ENCODE measurements at regions of chr1 and their contacts with region 1.

Region 1: GRCh38 chr1:204398217-204399081 is 13.2 kb downstream of the PPP1R15B start:
- DNase-seq: peak; percentile 88 to 91
- H3K4me3 ChIP-seq: no peak overlapping the region
- H3K4me3 Mint-ChIP-seq: no peak overlapping the region
- H3K27ac Mint-ChIP-seq: no peak overlapping the region
- H3K4me1 ChIP-seq: no peaks in the 10 kb centered on the region
- H3K4me1 Mint-ChIP-seq: peaks cover 10% of the 10 kb centered on the region
- H3K27me3 ChIP-seq: no peaks in the 10 kb centered on the region
- H3K27me3 Mint-ChIP-seq: no peaks in the 10 kb centered on the region
- CTCF ChIP-seq: peak; percentile 82 to 90

Region 2: DNA sequence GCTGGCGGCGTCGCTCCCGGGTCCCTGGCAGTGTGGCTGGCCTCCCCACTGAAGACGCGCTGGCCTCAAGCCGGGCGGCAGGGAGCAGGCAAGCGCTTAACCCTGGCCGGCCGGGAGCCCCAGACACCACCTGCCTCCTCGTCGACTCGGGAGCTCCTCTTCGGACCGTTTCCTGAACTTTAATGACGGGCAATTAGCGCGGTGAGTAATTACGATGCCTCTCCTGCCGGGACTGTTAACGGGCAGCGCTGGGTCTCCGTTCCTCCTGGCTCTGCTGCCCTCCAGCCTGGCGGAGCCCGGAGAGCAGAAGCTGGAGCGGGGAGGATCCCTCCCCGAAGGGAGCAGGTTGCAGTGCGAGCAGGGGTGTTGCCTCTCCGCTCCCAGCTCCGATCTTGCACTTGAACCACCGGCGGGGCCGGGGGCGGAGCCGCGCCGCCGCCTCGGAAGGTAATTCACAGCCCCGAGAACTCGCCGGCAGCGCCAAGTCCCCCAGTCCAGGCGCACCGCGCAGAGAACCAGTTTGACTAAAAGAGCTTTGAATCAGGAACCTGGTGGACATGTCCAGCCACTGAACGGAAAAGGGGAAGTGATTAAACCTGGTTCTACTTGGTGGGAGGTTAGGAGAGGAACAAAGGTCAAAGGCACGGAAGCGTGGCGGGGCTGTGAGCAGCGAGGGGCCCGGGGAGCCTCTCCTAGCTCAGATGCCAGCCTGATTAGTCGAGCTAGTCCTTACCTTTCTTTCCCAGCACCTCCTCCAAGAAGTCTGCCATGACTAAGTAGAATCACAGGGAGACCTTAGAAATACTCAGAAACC is 20.4 kb before region 1 on chr1:
- CTCF ChIA-PET with region 1: interaction called, 36 read pairs
- POLR2A ChIA-PET with region 1: interaction called, 7 read pairs
- intact Hi-C with region 1: loop called (anchors 1 kb)
- DNase-seq: peak; percentile 60 to 66
- H3K4me3 ChIP-seq: peak overlapping the region; percentile 76
- H3K4me3 Mint-ChIP-seq: peak overlapping the region; percentile 88
- H3K27ac Mint-ChIP-seq: peak overlapping the region; percentile 78
- H3K4me1 ChIP-seq: peaks cover 24% of the 10 kb centered on the region
- H3K4me1 Mint-ChIP-seq: no peaks in the 10 kb centered on the region
- H3K27me3 ChIP-seq: no peaks in the 10 kb centered on the region
- H3K27me3 Mint-ChIP-seq: no peaks in the 10 kb centered on the region
- CTCF ChIP-seq: no peak

Region 3: DNA sequence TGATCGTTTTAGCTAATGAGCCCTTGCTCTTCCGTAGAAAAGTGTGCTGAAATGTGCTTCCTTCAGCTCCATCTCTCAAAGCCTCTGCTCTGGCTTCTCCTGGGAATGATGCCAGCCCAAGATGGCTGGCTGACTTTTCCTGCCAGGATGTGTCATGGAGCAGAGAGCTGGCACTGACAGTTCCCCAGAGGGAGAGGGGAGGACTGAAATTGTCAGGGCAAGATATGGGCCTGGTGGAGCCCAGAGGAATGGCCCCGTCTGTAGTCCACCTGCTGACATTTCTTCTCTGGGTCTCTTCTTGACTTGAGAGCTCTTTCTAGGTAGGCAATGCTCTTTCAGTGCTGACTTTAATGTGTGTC is 13.5 kb before region 1 on chr1:
- CTCF ChIA-PET with region 1: interaction called, 22 read pairs
- POLR2A ChIA-PET with region 1: no interaction called
- intact Hi-C with region 1: loop called (anchors 1 kb)
- DNase-seq: no peak
- H3K4me3 ChIP-seq: no peak overlapping the region
- H3K4me3 Mint-ChIP-seq: no peak overlapping the region
- H3K27ac Mint-ChIP-seq: no peak overlapping the region
- H3K4me1 ChIP-seq: peaks cover 25% of the 10 kb centered on the region
- H3K4me1 Mint-ChIP-seq: no peaks in the 10 kb centered on the region
- H3K27me3 ChIP-seq: no peaks in the 10 kb centered on the region
- H3K27me3 Mint-ChIP-seq: no peaks in the 10 kb centered on the region
- CTCF ChIP-seq: no peak

Region 4: DNA sequence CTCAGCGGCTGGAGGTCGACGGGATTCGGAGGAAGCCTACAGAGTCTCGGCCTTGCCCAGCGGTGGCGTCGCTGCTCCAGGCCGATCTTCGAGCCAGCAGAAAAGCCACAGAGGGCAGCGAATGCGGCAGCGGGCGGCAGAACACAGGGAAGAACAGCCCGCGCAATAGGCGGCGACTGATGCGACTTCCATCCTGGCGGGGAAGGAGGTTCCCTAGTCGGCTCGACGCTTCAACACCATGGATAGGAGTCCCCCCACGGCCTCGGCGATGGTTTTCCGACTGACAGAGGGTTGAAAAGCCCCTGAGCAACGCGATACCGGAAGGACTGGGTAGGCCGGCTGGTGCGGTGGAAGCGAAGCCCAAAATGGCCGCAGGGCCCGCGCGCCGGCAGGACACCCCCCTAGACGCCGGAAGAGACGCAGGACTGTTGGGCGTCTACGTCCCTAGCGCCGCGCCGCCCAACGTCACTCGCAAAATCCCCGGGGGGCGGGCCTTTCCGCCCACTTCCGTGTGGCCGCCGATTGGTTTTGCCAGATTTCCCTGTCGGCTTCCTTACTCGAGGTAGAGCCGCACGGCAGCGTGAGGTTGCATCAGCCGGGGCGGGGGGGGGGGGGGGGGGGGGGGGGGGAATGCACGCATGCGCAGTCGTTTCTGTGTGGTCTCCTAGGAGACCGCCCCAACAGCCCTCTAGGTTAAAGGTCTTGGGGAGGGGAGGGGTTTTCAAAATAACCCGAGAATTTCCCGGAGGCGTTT is 13.2 kb after region 1 on chr1 and contains the start of gene PPP1R15B:
- CTCF ChIA-PET with region 1: interaction called, 20 read pairs
- POLR2A ChIA-PET with region 1: no interaction called
- intact Hi-C with region 1: loop called (anchors 1 kb)
- DNase-seq: peak; percentile 98
- H3K4me3 ChIP-seq: peak within 1 kb of the TSS; percentile 100
- H3K4me3 Mint-ChIP-seq: peak within 1 kb of the TSS; percentile 86
- H3K27ac Mint-ChIP-seq: peak within 1 kb of the TSS; percentile 90
- H3K4me1 ChIP-seq: peaks cover 9% of the 10 kb centered on the region
- H3K4me1 Mint-ChIP-seq: no peaks in the 10 kb centered on the region
- H3K27me3 ChIP-seq: no peaks in the 10 kb centered on the region
- H3K27me3 Mint-ChIP-seq: no peaks in the 10 kb centered on the region
- CTCF ChIP-seq: no peak
- total RNA-seq, gene PPP1R15B: 46.3 and 48.4 TPM in 2 replicates